Panc1 (cell line): ENCODE measurements at regions of chr15 and their contacts with region 1.

Region 1: GRCh38 chr15:35751413-35752133 is 205.6 kb upstream of the DPH6 start:
- DNase-seq: peak; percentile 50
- ATAC-seq: peak; percentile 93
- H3K4me3 ChIP-seq: no peak overlapping the region
- H3K27ac ChIP-seq: no peak overlapping the region
- H3K4me1 ChIP-seq: peaks cover 3% of the 10 kb centered on the region; the same call in 1 of the 2 replicates
- H3K27me3 ChIP-seq: no peaks in the 10 kb centered on the region
- CTCF ChIP-seq: peak; percentile 85

Region 2: GRCh38 chr15:34818526-34818925 is 933.0 kb before region 1 on chr15:
- CTCF ChIA-PET with region 1: no interaction called
- POLR2A ChIA-PET with region 1: interaction called, 14 read pairs
- in situ Hi-C with region 1: no loop called
- intact Hi-C with region 1: no loop called
- DNase-seq: no peak
- ATAC-seq: no peak
- H3K4me3 ChIP-seq: no peak overlapping the region
- H3K27ac ChIP-seq: no peak overlapping the region
- H3K4me1 ChIP-seq: no peaks in the 10 kb centered on the region
- H3K27me3 ChIP-seq: no peaks in the 10 kb centered on the region
- CTCF ChIP-seq: no peak

Region 3: DNA sequence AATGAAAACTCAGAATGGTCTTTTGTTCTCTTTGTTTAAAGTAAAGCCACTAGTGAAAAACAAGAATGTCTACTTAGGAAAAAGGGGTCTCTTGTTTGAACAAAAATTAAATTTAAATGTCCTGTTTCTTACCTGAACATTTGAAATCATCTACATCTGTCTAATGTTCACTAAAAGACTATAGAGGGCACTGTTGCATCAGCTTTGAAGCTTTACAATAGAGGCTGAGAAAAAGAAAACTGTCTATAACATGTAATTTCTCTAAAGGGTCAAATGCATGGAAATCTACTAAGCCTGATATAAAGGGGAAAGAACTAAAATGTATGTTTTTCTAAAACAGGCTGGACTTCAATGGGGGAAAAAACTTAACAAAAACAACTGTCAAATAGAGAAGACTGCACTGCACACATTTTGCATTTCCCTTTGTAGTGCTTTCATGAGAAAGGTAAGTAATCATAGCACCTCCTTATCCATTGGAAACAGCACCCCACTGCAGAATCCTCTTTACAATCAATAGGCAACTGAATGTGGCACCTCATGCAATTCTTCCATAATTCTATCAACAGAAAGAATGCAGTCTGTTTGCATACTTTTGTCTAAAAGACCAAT is 231.9 kb before region 1 on chr15:
- CTCF ChIA-PET with region 1: no interaction called
- POLR2A ChIA-PET with region 1: no interaction called
- in situ Hi-C with region 1: no loop called
- intact Hi-C with region 1: loop called (anchors 5 kb)
- DNase-seq: no peak
- ATAC-seq: peak; percentile 78
- H3K4me3 ChIP-seq: no peak overlapping the region
- H3K27ac ChIP-seq: no peak overlapping the region
- H3K4me1 ChIP-seq: peaks cover 4% of the 10 kb centered on the region; the same call in 1 of the 2 replicates
- H3K27me3 ChIP-seq: no peaks in the 10 kb centered on the region
- CTCF ChIP-seq: peak; percentile 64; the same call in 1 of the 2 replicates

Region 4: DNA sequence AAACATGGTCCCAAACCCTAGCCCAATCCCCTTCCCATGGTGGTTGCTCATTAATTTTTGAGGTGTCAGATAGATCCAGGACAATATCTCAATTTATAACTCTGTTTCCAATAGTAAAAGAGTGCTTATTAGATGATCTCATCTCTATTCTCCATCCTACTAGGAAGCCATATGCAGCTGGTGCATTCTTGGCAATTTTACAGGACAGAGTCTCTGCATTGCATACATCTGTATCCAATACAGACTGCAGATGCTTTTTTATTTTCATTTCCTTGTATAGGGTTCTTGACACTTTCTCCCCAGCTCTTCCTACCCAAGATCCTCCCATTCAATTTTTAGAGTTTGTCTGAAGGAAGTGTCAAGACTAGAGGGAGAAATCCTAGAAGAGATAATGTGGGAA is 10.8 kb before region 1 on chr15:
- CTCF ChIA-PET with region 1: no interaction called
- POLR2A ChIA-PET with region 1: no interaction called
- in situ Hi-C with region 1: no loop called
- intact Hi-C with region 1: no loop called
- DNase-seq: no peak
- ATAC-seq: no peak
- H3K4me3 ChIP-seq: no peak overlapping the region
- H3K27ac ChIP-seq: no peak overlapping the region
- H3K4me1 ChIP-seq: no peaks in the 10 kb centered on the region
- H3K27me3 ChIP-seq: no peaks in the 10 kb centered on the region
- CTCF ChIP-seq: no peak

Region 5: DNA sequence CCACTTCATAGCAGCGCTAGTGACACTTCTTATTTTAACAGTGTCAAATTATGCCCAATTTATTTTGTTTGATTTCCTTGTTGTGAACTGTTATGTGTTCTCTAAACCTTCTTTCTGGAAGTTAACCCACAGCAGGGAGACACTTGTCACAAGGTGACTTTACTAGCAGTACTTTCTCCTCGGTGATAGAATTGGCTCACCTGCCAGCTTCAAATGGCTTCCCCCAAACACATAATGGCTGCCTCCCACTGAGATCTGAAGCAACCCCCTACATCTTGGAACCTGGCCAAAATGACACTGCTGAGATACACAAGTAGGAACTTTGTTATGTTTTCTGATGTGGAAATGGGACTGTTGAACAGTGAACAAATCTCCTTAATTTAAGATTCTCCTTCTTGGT is 33.2 kb after region 1 on chr15:
- CTCF ChIA-PET with region 1: no interaction called
- POLR2A ChIA-PET with region 1: no interaction called
- in situ Hi-C with region 1: no loop called
- intact Hi-C with region 1: no loop called
- DNase-seq: no peak
- ATAC-seq: no peak
- H3K4me3 ChIP-seq: no peak overlapping the region
- H3K27ac ChIP-seq: no peak overlapping the region
- H3K4me1 ChIP-seq: no peaks in the 10 kb centered on the region
- H3K27me3 ChIP-seq: no peaks in the 10 kb centered on the region
- CTCF ChIP-seq: no peak

Region 6: GRCh38 chr15:35944945-35945585 is 193.5 kb after region 1 on chr15:
- CTCF ChIA-PET with region 1: interaction called, 5 read pairs
- POLR2A ChIA-PET with region 1: no interaction called
- in situ Hi-C with region 1: no loop called
- intact Hi-C with region 1: loop called (anchors 10 kb)
- DNase-seq: no peak
- ATAC-seq: no peak
- H3K4me3 ChIP-seq: no peak overlapping the region
- H3K27ac ChIP-seq: no peak overlapping the region
- H3K4me1 ChIP-seq: no peaks in the 10 kb centered on the region
- H3K27me3 ChIP-seq: no peaks in the 10 kb centered on the region
- CTCF ChIP-seq: no peak